CD4-positive, alpha-beta T cell (primary cell): ENCODE measurements at regions of chr19 and their contacts with region 1.

Region 1: GRCh38 chr19:2096480-2097329 is at the start of gene IZUMO4:
- DNase-seq: peak; percentile 99 to 100 (median 100)
- ATAC-seq: peak; percentile 79
- H3K4me3 ChIP-seq: peak within 1 kb of the TSS; percentile 93
- H3K4me3 Mint-ChIP-seq: peak within 1 kb of the TSS; percentile 97
- H3K27ac ChIP-seq: peak within 1 kb of the TSS; percentile 75 to 79
- H3K27ac Mint-ChIP-seq: peak within 1 kb of the TSS; percentile 96
- H3K4me1 ChIP-seq: peaks cover 54% of the 10 kb centered on the region
- H3K4me1 Mint-ChIP-seq: peaks cover 25% of the 10 kb centered on the region
- H3K27me3 ChIP-seq: no peaks in the 10 kb centered on the region
- H3K27me3 Mint-ChIP-seq: no peaks in the 10 kb centered on the region
- CTCF ChIP-seq: peak; percentile 38
- total RNA-seq, gene IZUMO4: 17.4 to 17.9 TPM

Region 2: DNA sequence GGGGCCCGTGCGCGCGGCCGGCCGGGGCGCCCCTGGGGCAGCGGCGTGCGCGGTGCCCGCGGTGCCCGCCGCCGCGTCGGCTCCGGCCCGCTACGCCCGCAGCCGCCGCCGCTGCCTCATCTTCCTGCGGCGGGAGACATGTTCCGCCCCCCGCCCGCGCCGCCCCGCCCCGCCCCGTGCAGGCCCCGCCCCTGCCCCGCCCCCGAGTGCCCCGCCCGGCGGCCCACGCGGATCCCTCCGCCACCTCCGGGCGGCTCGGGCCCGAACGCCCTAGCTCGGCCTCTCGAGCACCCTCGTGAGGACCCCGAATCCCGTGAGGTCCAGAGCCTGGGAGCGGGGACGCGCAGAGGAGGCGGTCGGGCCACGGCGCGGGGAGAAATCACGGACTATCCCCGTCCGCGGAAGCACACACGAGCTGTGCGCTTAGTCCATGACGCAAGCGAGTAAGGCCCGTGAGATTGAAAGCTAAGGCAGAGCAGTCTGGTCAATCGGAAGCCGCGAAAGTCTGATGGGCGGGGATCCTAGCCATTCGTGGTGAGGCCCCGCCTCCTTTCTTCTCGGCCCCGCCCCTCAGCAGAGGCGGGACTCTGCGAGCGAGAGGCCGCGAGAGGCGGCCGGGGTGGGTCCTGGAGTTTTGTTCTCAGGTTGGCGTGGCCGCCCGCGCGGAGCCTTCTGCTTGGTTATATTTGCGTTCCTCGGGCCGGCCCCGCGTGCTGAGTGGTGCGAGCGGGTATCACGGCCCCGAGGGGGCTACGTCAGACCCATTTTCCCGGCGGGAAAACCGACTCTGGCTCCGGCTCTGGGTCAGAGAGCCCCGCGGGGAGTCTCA is 444.0 kb before region 1 on chr19 and contains the start of gene TCF3:
- CTCF ChIA-PET with region 1: no interaction called
- POLR2A ChIA-PET with region 1: no interaction called
- intact Hi-C with region 1: no loop called
- DNase-seq: peak; percentile 97 to 99 (median 99)
- ATAC-seq: peak; percentile 90
- H3K4me3 ChIP-seq: peak within 1 kb of the TSS; percentile 63
- H3K4me3 Mint-ChIP-seq: peak within 1 kb of the TSS; percentile 97
- H3K27ac ChIP-seq: peak within 1 kb of the TSS; percentile 99
- H3K27ac Mint-ChIP-seq: peak within 1 kb of the TSS; percentile 98
- H3K4me1 ChIP-seq: peaks cover 26% of the 10 kb centered on the region
- H3K4me1 Mint-ChIP-seq: peaks cover 14% of the 10 kb centered on the region
- H3K27me3 ChIP-seq: no peaks in the 10 kb centered on the region
- H3K27me3 Mint-ChIP-seq: peaks cover 10% of the 10 kb centered on the region
- CTCF ChIP-seq: no peak
- total RNA-seq, gene TCF3: 51.2 to 52.2 TPM

Region 3: GRCh38 chr19:1725100-1726064 is 371.3 kb before region 1 on chr19:
- CTCF ChIA-PET with region 1: no interaction called
- POLR2A ChIA-PET with region 1: no interaction called
- intact Hi-C with region 1: no loop called
- DNase-seq: peak in 8 of 14 experiments; percentile 6 to 58 (median 24)
- ATAC-seq: peak; percentile 46
- H3K4me3 ChIP-seq: peak overlapping the region; percentile 49
- H3K4me3 Mint-ChIP-seq: peak overlapping the region; percentile 67
- H3K27ac ChIP-seq: no peak overlapping the region
- H3K27ac Mint-ChIP-seq: no peak overlapping the region
- H3K4me1 ChIP-seq: peaks cover 12% of the 10 kb centered on the region
- H3K4me1 Mint-ChIP-seq: peaks cover 5% of the 10 kb centered on the region
- H3K27me3 ChIP-seq: peaks cover 29 to 39% of the 10 kb centered on the region in 2 experiments
- H3K27me3 Mint-ChIP-seq: peaks cover 67% of the 10 kb centered on the region
- CTCF ChIP-seq: no peak

Region 4: DNA sequence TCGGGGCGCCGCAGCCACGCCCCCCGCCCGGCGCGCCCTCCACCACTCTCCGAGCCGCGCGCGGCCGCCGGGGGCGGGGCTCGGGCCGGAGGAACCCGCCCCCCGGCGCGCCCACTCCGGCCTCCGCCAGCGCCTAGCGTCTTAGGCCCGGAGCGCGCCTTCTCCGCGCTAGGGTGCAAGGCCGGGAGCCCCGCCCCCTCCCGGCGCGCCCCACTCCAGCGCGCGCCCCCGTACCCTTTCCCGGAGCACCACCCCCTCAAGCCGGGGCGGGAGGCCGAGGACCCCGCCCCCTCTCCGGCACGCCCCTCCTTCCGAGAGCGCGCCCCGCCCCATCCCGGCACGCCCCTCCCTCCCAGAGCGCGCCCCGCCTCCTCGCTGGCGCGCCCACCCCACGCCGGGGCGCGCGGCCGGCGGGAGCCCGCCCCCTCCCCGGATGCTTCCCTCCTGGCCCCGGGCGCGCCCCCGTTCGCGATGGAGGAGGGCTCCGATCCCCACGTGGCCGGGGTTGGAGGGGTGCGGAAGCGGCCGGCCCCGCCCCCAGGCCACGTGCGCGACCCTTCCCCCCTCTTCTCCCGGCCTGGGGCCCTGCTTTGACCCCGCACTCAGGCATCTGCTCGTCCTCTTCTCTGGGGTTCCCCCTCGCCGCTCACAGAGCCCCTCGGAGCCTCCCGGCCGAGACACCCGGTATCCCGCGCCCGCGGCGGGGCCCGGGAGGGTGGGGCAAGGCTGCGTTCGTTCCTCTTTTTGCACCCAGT is 232.8 kb before region 1 on chr19:
- CTCF ChIA-PET with region 1: no interaction called
- POLR2A ChIA-PET with region 1: no interaction called
- intact Hi-C with region 1: loop called in 1 of 2 experiments (anchors 5 kb)
- DNase-seq: peak; percentile 83 to 97 (median 92)
- ATAC-seq: peak; percentile 66
- H3K4me3 ChIP-seq: peak overlapping the region; percentile 83
- H3K4me3 Mint-ChIP-seq: peak overlapping the region; percentile 90
- H3K27ac ChIP-seq: peak overlapping the region; percentile 67 to 89
- H3K27ac Mint-ChIP-seq: peak overlapping the region; percentile 63
- H3K4me1 ChIP-seq: peaks cover 47% of the 10 kb centered on the region
- H3K4me1 Mint-ChIP-seq: peaks cover 41% of the 10 kb centered on the region
- H3K27me3 ChIP-seq: no peaks in the 10 kb centered on the region
- H3K27me3 Mint-ChIP-seq: no peaks in the 10 kb centered on the region
- CTCF ChIP-seq: no peak

Region 5: DNA sequence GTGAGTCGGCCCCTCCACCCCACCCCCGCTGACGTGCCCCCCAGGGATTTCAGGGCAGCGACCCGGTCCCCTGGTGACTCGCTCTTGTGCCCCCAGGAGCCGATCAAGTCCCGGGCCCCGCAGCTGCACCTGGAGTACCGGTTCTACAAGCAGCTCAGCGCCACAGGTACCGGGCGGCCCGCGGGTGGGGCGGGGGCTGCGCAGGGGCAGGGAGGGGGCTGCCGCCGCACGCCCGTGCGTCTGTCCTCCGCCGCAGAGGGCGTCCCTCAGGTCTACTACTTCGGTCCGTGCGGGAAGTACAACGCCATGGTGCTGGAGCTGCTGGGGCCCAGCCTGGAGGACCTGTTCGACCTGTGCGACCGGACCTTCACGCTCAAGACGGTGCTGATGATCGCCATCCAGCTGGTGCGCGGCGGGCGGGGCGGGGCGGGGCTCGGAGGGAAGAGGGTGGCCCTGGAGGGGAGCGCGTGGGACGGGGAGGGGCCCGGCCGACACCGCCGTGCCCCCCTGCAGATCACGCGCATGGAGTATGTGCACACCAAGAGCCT is 118.3 kb before region 1 on chr19:
- CTCF ChIA-PET with region 1: no interaction called
- POLR2A ChIA-PET with region 1: no interaction called
- intact Hi-C with region 1: no loop called
- DNase-seq: no peak
- ATAC-seq: no peak
- H3K4me3 ChIP-seq: no peak overlapping the region
- H3K4me3 Mint-ChIP-seq: no peak overlapping the region
- H3K27ac ChIP-seq: no peak overlapping the region
- H3K27ac Mint-ChIP-seq: no peak overlapping the region
- H3K4me1 ChIP-seq: peaks cover 3% of the 10 kb centered on the region
- H3K4me1 Mint-ChIP-seq: peaks cover 3% of the 10 kb centered on the region
- H3K27me3 ChIP-seq: no peaks in the 10 kb centered on the region
- H3K27me3 Mint-ChIP-seq: no peaks in the 10 kb centered on the region
- CTCF ChIP-seq: no peak

Region 6: GRCh38 chr19:2041683-2042484 is 54.8 kb before region 1 on chr19:
- CTCF ChIA-PET with region 1: interaction called, 5 read pairs
- POLR2A ChIA-PET with region 1: interaction called, 12 read pairs
- intact Hi-C with region 1: loop called (anchors 2 kb)
- DNase-seq: peak; percentile 99 to 100 (median 100)
- ATAC-seq: peak; percentile 78
- H3K4me3 ChIP-seq: peak overlapping the region; percentile 46
- H3K4me3 Mint-ChIP-seq: peak overlapping the region; percentile 79
- H3K27ac ChIP-seq: peak overlapping the region; percentile 98 to 99
- H3K27ac Mint-ChIP-seq: peak overlapping the region; percentile 97
- H3K4me1 ChIP-seq: peaks cover 72% of the 10 kb centered on the region
- H3K4me1 Mint-ChIP-seq: peaks cover 28% of the 10 kb centered on the region
- H3K27me3 ChIP-seq: no peaks in the 10 kb centered on the region
- H3K27me3 Mint-ChIP-seq: no peaks in the 10 kb centered on the region
- CTCF ChIP-seq: no peak

Region 7: DNA sequence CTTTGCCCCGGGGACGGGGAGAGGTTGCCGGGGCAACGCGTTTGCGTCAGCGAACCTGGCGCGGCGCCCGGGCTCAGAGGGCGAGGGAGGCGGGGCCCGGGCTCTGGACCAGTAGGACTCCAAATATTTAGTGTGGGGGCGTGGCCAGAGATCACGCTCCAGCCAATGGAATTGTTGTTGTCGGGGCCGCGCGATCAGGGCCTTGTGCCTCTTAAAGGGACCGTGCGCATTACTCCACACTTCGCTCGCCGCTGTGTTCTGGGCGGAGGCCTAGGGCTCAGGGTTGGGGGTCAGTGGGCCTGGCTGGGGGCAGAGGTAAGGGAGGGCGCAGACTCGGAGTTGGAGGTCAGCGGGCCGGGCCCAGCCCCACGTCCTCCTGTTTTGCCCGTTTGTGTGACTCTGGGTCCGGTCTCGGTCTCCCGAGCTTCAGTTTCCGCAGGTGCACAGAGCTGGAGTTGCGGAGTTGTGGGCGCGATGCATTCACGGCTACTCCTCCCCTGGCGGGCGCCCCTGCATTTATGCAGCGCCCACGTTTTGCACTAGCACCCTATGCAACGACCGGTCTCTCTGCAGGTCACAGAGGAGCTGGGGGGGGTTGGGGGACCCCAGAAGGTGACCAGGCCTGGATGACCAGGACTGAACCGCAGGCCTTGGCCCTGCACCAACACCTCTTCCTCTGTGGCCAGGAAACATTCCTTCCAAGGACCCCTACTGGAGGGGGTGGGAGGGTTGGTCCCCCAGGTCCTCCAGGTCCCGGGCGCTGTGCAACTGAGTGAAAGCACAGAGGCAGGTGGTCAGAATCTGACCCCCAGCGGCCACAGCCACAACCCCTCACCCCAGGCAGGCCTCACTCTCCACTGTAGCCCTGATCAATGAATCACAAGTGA is 35.0 kb before region 1 on chr19:
- CTCF ChIA-PET with region 1: interaction called, 3 read pairs
- POLR2A ChIA-PET with region 1: interaction called, 3 read pairs
- intact Hi-C with region 1: loop called (anchors 1 kb)
- DNase-seq: peak; percentile 98 to 100 (median 99)
- ATAC-seq: peak; percentile 92
- H3K4me3 ChIP-seq: peak overlapping the region; percentile 84
- H3K4me3 Mint-ChIP-seq: peak overlapping the region; percentile 92
- H3K27ac ChIP-seq: peak overlapping the region; percentile 95 to 97
- H3K27ac Mint-ChIP-seq: peak overlapping the region; percentile 98
- H3K4me1 ChIP-seq: peaks cover 69% of the 10 kb centered on the region
- H3K4me1 Mint-ChIP-seq: peaks cover 40% of the 10 kb centered on the region
- H3K27me3 ChIP-seq: no peaks in the 10 kb centered on the region
- H3K27me3 Mint-ChIP-seq: no peaks in the 10 kb centered on the region
- CTCF ChIP-seq: no peak

Region 8: GRCh38 chr19:2076526-2076981 is 20.2 kb before region 1 on chr19:
- CTCF ChIA-PET with region 1: interaction called, 3 read pairs
- POLR2A ChIA-PET with region 1: interaction called, 16 read pairs
- intact Hi-C with region 1: no loop called
- DNase-seq: no peak
- ATAC-seq: no peak
- H3K4me3 ChIP-seq: no peak overlapping the region
- H3K4me3 Mint-ChIP-seq: no peak overlapping the region
- H3K27ac ChIP-seq: no peak overlapping the region
- H3K27ac Mint-ChIP-seq: no peak overlapping the region
- H3K4me1 ChIP-seq: peaks cover 63% of the 10 kb centered on the region
- H3K4me1 Mint-ChIP-seq: peaks cover 34% of the 10 kb centered on the region
- H3K27me3 ChIP-seq: no peaks in the 10 kb centered on the region
- H3K27me3 Mint-ChIP-seq: no peaks in the 10 kb centered on the region
- CTCF ChIP-seq: no peak

Region 9: DNA sequence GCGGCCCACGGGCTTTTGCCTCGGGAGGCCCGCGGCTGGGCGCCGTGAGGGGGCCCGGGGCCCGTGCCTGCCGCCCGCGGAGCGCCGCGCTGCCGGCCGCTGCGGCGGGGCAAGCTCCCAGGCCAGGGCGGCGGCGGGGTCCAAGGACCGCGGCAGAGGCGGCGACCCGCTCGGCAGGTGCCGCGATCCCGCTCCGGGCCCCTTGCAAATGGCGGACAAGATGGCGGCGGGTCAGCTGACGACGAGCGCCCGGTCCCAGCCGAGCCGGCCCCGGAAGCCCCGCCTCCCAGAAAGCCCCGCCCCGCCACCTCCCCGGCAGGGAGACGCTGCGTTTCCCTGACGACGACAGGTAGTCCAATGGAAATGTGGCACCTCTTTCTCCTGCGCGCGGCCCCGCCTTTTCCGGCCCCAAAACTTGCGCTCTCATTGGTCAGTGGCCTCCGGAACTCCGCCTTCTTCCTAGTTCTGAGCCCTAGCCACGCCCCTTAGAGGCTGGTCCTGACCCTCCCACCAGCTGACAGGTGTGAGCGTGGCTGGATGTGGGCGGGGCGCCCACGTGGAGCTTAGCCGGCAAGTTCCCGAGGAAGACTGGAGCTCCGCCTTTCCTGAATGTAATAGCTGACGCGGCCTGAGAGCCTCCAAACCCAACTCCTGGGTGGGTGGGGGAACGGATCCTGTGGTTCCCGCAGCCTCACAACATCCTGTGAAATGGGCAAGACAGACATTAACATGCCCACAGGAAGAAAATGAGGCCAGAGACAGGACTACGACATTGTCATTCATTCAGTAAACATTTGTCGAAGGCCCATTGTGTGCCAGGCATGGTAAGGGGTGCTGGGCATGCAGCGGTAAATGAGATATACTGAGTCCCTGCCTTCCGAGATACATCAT is 54.9 kb after region 1 on chr19 and contains the start of gene AP3D1:
- CTCF ChIA-PET with region 1: no interaction called
- POLR2A ChIA-PET with region 1: no interaction called
- intact Hi-C with region 1: loop called (anchors 1 to 2 kb)
- DNase-seq: peak; percentile 100
- ATAC-seq: peak; percentile 87
- H3K4me3 ChIP-seq: peak within 1 kb of the TSS; percentile 80
- H3K4me3 Mint-ChIP-seq: peak within 1 kb of the TSS; percentile 93
- H3K27ac ChIP-seq: peak within 1 kb of the TSS; percentile 77 to 92
- H3K27ac Mint-ChIP-seq: peak within 1 kb of the TSS; percentile 90
- H3K4me1 ChIP-seq: peaks cover 50% of the 10 kb centered on the region
- H3K4me1 Mint-ChIP-seq: peaks cover 31% of the 10 kb centered on the region
- H3K27me3 ChIP-seq: no peaks in the 10 kb centered on the region
- H3K27me3 Mint-ChIP-seq: no peaks in the 10 kb centered on the region
- CTCF ChIP-seq: no peak
- total RNA-seq, gene AP3D1: 41.8 to 41.9 TPM